ENCODE measurements at regions of chr16 and their contacts with region 1.

Region 1: DNA sequence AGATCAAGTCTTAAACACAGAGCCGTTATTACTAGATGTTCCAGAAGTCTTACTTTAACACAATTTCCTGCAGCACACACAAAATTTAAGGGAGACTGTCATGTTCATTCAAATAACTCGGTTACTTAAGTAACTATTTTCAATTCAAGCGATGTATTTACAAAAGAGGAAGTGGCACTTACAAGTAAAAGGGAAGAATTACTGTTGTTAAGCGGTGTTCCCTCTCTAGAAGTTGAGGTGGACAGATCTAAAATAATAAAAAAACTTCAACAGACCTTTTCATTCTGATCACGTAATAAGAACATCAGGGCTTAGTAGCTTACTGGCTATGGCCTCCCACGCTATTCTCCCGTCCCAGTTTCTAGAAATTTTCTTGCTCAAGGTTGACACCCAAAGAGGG is 26.2 kb upstream of the TXNDC11 start:
- DNase-seq: no peak
- ATAC-seq: no peak
- H3K4me3 ChIP-seq: no peak overlapping the region
- H3K4me3 Mint-ChIP-seq: no peak overlapping the region
- H3K27ac ChIP-seq: no peak overlapping the region
- H3K27ac Mint-ChIP-seq: peak overlapping the region; percentile 46
- H3K4me1 ChIP-seq: no peaks in the 10 kb centered on the region
- H3K4me1 Mint-ChIP-seq: peaks cover 9% of the 10 kb centered on the region
- H3K27me3 ChIP-seq: no peaks in the 10 kb centered on the region
- H3K27me3 Mint-ChIP-seq: no peaks in the 10 kb centered on the region
- CTCF ChIP-seq: no peak

Region 2: GRCh38 chr16:11546608-11547061 is 222.2 kb before region 1 on chr16:
- CTCF ChIA-PET with region 1: no interaction called
- POLR2A ChIA-PET with region 1: no interaction called
- intact Hi-C with region 1: no loop called
- DNase-seq: no peak
- ATAC-seq: peak; percentile 16
- H3K4me3 ChIP-seq: no peak overlapping the region
- H3K4me3 Mint-ChIP-seq: no peak overlapping the region
- H3K27ac ChIP-seq: no peak overlapping the region
- H3K27ac Mint-ChIP-seq: peak overlapping the region; percentile 71
- H3K4me1 ChIP-seq: no peaks in the 10 kb centered on the region
- H3K4me1 Mint-ChIP-seq: peaks cover 24% of the 10 kb centered on the region
- H3K27me3 ChIP-seq: no peaks in the 10 kb centered on the region
- H3K27me3 Mint-ChIP-seq: no peaks in the 10 kb centered on the region
- CTCF ChIP-seq: no peak

Region 3: GRCh38 chr16:11621920-11622651 is 146.8 kb before region 1 on chr16:
- CTCF ChIA-PET with region 1: no interaction called
- POLR2A ChIA-PET with region 1: no interaction called
- intact Hi-C with region 1: no loop called
- DNase-seq: peak; percentile 44 to 90 (median 79)
- ATAC-seq: peak; percentile 93
- H3K4me3 ChIP-seq: peak overlapping the region; percentile 41 to 44
- H3K4me3 Mint-ChIP-seq: peak overlapping the region; percentile 79
- H3K27ac ChIP-seq: peak overlapping the region; percentile 70 to 86
- H3K27ac Mint-ChIP-seq: peak overlapping the region; percentile 98
- H3K4me1 ChIP-seq: peaks cover 80% of the 10 kb centered on the region
- H3K4me1 Mint-ChIP-seq: peaks cover 69% of the 10 kb centered on the region
- H3K27me3 ChIP-seq: no peaks in the 10 kb centered on the region
- H3K27me3 Mint-ChIP-seq: no peaks in the 10 kb centered on the region
- CTCF ChIP-seq: no peak

Region 4: DNA sequence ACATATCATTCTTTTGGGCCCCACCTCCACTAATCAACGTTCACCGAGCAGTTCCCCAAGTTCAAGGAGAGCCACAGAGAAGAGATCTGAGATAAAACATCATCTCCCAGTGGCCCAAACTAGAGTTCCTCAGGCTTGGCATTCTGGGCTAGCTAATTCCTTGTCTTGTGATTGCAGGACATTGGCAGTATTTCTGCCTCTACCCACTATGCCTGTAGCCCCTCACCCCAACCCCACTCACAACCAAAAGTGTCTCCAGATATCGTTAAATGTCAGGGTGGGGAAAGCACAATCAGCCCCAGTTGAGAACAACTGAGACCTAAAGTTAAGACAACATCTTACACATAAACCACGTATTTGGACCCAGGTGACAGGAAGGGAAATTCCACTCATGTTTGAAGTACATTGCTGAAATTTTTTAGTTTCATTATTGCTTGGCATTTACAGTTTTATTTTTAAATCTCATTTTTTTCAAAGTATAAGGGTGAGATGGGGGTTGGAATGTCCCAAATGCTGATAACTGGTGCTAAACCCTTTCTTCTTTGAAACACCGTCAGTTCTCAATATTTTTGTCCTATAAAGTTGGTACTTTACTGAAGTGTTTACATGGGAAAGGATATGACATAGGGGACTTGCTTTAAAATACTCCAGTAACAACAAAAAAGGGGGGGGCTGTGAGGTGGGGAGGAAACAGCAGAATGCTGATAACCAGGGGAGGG is 14.6 kb after region 1 on chr16:
- CTCF ChIA-PET with region 1: no interaction called
- POLR2A ChIA-PET with region 1: no interaction called
- intact Hi-C with region 1: loop called in 1 of 2 experiments (anchors 2 kb)
- DNase-seq: peak in 6 of 9 experiments; percentile 17 to 93 (median 54)
- ATAC-seq: peak; percentile 81
- H3K4me3 ChIP-seq: peak overlapping the region; percentile 32 to 36
- H3K4me3 Mint-ChIP-seq: peak overlapping the region; percentile 78
- H3K27ac ChIP-seq: peak overlapping the region; percentile 82 to 96
- H3K27ac Mint-ChIP-seq: peak overlapping the region; percentile 99
- H3K4me1 ChIP-seq: peaks cover 51% of the 10 kb centered on the region
- H3K4me1 Mint-ChIP-seq: peaks cover 57% of the 10 kb centered on the region
- H3K27me3 ChIP-seq: no peaks in the 10 kb centered on the region
- H3K27me3 Mint-ChIP-seq: no peaks in the 10 kb centered on the region
- CTCF ChIP-seq: no peak

Region 5: DNA sequence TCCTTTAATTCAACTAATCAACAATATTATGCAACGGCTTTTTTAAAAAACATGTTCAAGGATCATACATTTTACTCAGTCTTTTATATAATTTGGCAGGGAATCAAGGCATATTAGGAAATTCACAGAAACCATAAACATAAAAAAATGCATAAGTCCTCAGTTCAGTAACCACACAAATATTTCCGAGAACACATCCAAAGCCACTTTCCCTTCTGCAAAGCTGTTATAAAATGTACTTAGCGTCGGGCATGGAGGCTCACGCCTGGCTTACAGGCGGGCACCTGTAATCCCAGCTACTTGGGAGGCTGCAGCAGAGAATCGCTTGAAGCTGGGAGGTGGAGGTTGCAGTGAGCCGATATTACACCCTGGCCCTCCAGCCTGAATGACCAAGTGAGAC is 37.9 kb after region 1 on chr16:
- CTCF ChIA-PET with region 1: no interaction called
- POLR2A ChIA-PET with region 1: interaction called, 3 read pairs
- intact Hi-C with region 1: loop called in 1 of 2 experiments (anchors 5 kb)
- DNase-seq: no peak
- ATAC-seq: no peak
- H3K4me3 ChIP-seq: no peak overlapping the region
- H3K4me3 Mint-ChIP-seq: no peak overlapping the region
- H3K27ac ChIP-seq: no peak overlapping the region
- H3K27ac Mint-ChIP-seq: no peak overlapping the region
- H3K4me1 ChIP-seq: no peaks in the 10 kb centered on the region
- H3K4me1 Mint-ChIP-seq: peaks cover 7% of the 10 kb centered on the region
- H3K27me3 ChIP-seq: no peaks in the 10 kb centered on the region
- H3K27me3 Mint-ChIP-seq: no peaks in the 10 kb centered on the region
- CTCF ChIP-seq: no peak

Region 6: GRCh38 chr16:12026741-12027490 is 258.1 kb after region 1 on chr16:
- CTCF ChIA-PET with region 1: no interaction called
- POLR2A ChIA-PET with region 1: no interaction called
- intact Hi-C with region 1: no loop called
- DNase-seq: peak in 4 of 9 experiments; percentile 10 to 48 (median 23)
- ATAC-seq: peak; percentile 42
- H3K4me3 ChIP-seq: no peak overlapping the region
- H3K4me3 Mint-ChIP-seq: no peak overlapping the region
- H3K27ac ChIP-seq: no peak overlapping the region
- H3K27ac Mint-ChIP-seq: peak overlapping the region; percentile 24
- H3K4me1 ChIP-seq: no peaks in the 10 kb centered on the region
- H3K4me1 Mint-ChIP-seq: peaks cover 10% of the 10 kb centered on the region
- H3K27me3 ChIP-seq: no peaks in the 10 kb centered on the region
- H3K27me3 Mint-ChIP-seq: no peaks in the 10 kb centered on the region
- CTCF ChIP-seq: no peak

Measured in CD8-positive, alpha-beta T cell (primary cell).